HCT116 (cell line): ENCODE measurements at regions of chr1 and their contacts with region 1.

Region 1: DNA sequence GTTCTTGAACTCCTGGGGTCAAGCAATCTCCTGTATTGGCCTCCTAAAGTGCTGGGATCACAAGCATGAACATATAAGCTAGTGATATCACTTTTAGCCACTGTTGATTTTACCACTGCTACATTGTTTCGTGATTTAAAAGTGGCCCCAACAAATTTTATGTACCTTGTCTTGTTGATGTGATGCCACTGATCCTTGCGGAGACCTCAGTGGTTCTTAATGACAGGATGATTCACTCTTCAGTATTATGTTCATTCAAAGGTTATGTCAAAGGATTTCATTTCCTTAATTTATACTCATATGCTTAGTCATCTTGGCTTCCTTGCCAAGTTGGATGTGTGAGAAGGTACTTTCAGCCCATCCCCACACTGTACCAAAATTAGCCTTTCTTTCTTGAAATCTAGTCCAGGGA is 12.1 kb downstream of the PRKACB start:
- DNase-seq: peak; percentile 97
- ATAC-seq: peak; percentile 87
- H3K4me3 ChIP-seq: no peak overlapping the region
- H3K27ac ChIP-seq: peak overlapping the region; percentile 99
- H3K4me1 ChIP-seq: peaks cover 59 to 87% of the 10 kb centered on the region in 2 experiments
- H3K27me3 ChIP-seq: no peaks in the 10 kb centered on the region
- CTCF ChIP-seq: no peak
- POLR2A ChIP-seq: no peak
- RAD21 ChIP-seq: peak; percentile 55

Region 2: GRCh38 chr1:84347932-84348555 is 191.8 kb after region 1 on chr1:
- CTCF ChIA-PET with region 1: no interaction called
- POLR2A ChIA-PET with region 1: no interaction called
- RAD21 ChIA-PET with region 1: no interaction called
- intact Hi-C with region 1: loop called (anchors 5 kb)
- DNase-seq: peak; percentile 94
- ATAC-seq: peak; percentile 90
- H3K4me3 ChIP-seq: peak overlapping the region; percentile 24 to 48
- H3K27ac ChIP-seq: peak overlapping the region; percentile 97
- H3K4me1 ChIP-seq: peaks cover 79 to 82% of the 10 kb centered on the region in 2 experiments
- H3K27me3 ChIP-seq: no peaks in the 10 kb centered on the region
- CTCF ChIP-seq: no peak
- POLR2A ChIP-seq: peak; percentile 60
- RAD21 ChIP-seq: peak; percentile 33; the same call in 1 of the 2 replicates

Region 3: DNA sequence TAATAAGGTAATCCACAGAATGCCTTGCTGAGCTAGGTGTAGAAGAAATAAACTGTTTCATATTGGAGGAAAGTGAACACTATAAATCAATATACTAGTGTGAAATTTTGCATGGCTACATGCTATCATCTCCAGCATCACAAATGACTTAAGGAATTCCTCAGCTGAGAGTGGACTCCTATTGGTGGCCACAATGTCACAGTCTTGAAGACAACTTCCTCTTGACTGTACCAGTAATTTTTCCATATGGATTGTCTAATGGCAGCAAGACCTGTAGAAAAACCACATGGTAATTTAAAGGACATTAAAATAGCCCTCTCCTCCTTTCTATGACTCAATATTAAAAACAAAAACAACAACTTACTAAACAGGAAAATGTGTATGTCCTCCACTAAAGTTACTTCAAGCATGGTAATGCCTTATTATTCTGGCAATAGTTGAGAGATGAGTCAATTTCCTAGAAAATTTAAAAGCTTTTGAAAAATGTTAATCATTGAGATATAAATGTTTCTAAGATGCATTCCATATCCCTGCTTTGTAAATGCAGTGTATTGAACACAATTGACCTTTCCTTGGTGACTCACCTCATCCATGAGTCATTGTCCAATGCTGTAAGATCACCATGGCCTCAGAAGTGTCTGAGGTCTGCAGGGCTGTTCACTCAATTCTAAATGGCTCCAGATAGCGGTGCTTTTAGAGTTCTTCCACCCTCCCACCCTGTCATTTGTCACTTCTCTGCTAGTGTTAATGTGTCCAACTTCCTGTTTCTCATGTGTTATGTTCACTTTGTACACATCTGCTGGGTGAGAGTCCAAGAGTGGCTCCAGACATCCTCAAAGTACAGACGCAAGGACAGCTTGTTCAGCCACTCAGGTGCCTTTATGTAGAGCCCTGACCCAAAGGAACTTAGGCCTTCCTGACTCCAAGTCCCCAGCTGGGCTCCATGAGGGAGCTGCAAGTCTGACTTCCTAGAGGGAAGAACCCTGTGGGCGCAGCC is 209.3 kb after region 1 on chr1:
- CTCF ChIA-PET with region 1: no interaction called
- POLR2A ChIA-PET with region 1: no interaction called
- RAD21 ChIA-PET with region 1: no interaction called
- intact Hi-C with region 1: loop called (anchors 2 kb)
- DNase-seq: peak; percentile 99
- ATAC-seq: peak; percentile 87
- H3K4me3 ChIP-seq: peak overlapping the region in 1 of 2 experiments; percentile 1; a peak in 1 of 4 replicates
- H3K27ac ChIP-seq: peak overlapping the region; percentile 99
- H3K4me1 ChIP-seq: peaks cover 38 to 63% of the 10 kb centered on the region in 2 experiments
- H3K27me3 ChIP-seq: no peaks in the 10 kb centered on the region
- CTCF ChIP-seq: no peak
- POLR2A ChIP-seq: peak; percentile 8
- RAD21 ChIP-seq: peak; percentile 40; the same call in 1 of the 2 replicates